ENCODE measurements at regions of chr10 and their contacts with region 1.

Region 1: GRCh38 chr10:73730153-73730906 is 13.8 kb upstream of the SEC24C start:
- DNase-seq: peak; percentile 91
- ATAC-seq: peak; percentile 94

Region 2: DNA sequence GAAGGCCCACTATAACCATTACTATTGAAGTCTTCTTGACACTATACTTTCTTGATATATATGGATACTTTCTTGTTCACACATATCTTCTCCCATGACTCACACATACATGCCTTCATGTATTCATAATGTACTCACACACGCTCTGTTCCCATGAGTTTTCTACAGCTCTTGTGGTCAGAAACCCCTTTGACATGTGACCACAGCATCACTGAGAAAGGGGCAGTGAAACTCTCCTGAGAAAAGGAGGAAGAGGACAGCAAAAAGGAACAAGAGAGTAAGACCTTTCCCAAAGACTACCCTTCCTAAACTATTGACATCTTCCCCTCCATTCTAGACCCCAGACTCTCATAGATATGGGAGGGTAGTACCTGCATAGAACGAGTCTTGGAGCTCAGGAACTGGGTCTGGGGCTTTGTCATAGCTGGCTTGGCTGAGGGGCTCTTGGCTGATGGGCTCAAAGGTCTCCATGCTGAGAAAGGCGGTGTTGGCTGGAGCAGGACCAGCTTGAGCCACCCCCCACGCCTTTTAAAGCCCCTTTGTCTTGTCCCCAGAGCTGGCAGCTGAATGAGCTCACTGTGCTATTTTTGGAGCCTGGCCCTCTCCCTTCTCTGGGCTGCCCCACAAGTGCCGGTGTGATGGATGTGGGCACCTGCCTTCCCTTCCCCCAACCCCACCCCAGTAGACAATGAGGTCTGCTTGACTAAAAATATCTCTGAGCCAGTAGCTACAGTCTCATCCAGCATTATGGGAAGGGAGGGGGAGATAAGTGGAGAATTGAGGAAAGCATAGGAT is 79.6 kb before region 1 on chr10:
- intact Hi-C with region 1: loop called (anchors 10 kb)
- DNase-seq: peak; percentile 74
- ATAC-seq: peak; percentile 48

Region 3: GRCh38 chr10:74363727-74364126 is 633.4 kb after region 1 on chr10:
- intact Hi-C with region 1: no loop called
- DNase-seq: no peak
- ATAC-seq: peak; percentile 42

Measured in Right ventricle myocardium superior (tissue), 1 donor.